Endothelial cell of umbilical vein (primary cell): ENCODE measurements at regions of chr20 and their contacts with region 1.

Region 1: DNA sequence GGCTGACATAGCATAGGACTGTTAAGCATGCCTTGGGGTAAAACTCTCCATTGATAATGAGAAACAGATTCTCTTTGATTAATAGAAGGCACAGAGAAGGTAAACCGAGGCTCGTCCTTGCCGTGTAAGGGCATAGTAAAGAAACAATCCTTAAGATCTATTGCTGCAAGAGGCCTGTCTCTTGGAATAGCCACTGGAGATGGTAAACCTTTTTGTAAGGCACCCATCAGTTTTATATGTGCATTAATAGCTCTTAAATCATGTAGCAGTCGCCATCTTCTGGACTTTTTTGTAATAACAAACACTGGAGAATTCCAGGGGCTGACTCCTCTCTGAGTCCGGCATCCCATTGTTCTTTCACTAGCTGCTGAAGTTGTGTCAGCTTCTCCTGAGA is 8.4 kb upstream of the ABHD12 start:
- DNase-seq: peak; percentile 79
- H3K4me3 ChIP-seq: no peak overlapping the region
- H3K27ac ChIP-seq: no peak overlapping the region
- H3K4me1 ChIP-seq: no peaks in the 10 kb centered on the region
- H3K27me3 ChIP-seq: peaks cover 0 to 1% of the 10 kb centered on the region in 2 experiments
- CTCF ChIP-seq: peak; percentile 35
- POLR2A ChIP-seq: no peak

Region 2: DNA sequence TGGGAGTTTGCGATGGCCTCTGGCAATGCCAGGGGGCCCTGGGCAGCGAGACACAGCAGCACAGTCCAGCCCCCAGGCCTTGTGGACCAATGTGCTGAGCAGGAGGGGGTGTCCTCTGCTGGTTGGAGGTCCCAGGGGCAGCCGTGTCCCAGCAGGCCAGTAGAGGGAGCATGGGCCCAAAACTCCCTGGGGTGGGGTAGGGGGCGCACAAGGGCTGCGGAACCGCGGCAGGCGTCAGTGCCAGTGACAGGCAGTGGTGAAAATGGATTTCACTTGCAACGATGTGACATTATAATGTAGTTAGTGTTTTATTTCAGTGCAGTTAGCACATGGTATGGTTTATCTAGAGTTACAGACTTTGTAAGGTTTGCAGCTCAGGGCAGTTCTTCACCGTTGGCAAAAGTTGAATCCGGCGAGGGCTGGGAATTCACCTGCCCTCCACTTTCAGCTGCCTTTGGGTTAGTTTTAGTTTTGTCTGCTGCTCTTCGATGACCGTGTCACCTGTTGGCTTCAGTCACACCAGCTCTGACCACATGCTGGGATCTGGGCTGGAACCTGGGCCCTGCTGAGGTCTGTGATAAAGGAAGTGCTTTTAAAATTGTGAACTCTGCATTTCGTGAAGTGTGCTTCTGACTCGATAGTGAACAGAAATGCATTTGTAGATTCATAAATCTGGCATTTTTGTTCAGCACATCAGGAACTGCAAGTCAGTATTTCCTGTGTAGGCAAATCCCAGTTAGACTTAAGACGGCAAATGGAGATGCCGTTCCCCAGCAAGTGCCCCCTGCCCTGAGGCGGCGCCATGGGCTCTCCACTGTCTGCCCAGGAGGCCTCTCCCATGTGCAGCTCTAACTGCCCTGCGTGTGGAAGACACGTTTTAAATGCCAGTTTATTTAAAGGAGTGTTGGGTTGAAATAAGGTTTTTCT is 104.3 kb before region 1 on chr20:
- CTCF ChIA-PET with region 1: interaction called, 104 read pairs
- POLR2A ChIA-PET with region 1: no interaction called
- dilution Hi-C with region 1: no loop called
- intact Hi-C with region 1: loop called (anchors 1 kb)
- DNase-seq: peak; percentile 71
- H3K4me3 ChIP-seq: no peak overlapping the region
- H3K27ac ChIP-seq: no peak overlapping the region
- H3K4me1 ChIP-seq: no peaks in the 10 kb centered on the region
- H3K27me3 ChIP-seq: no peaks in the 10 kb centered on the region
- CTCF ChIP-seq: peak; percentile 93 to 98
- POLR2A ChIP-seq: no peak

Region 3: GRCh38 chr20:25310268-25310920 is 88.6 kb before region 1 on chr20:
- CTCF ChIA-PET with region 1: interaction called, 31 read pairs
- POLR2A ChIA-PET with region 1: no interaction called
- dilution Hi-C with region 1: no loop called
- intact Hi-C with region 1: loop called (anchors 1 kb)
- DNase-seq: peak; percentile 68
- H3K4me3 ChIP-seq: no peak overlapping the region
- H3K27ac ChIP-seq: peak overlapping the region; percentile 21
- H3K4me1 ChIP-seq: peaks cover 16% of the 10 kb centered on the region
- H3K27me3 ChIP-seq: no peaks in the 10 kb centered on the region
- CTCF ChIP-seq: peak; percentile 38 to 44
- POLR2A ChIP-seq: no peak

Region 4: DNA sequence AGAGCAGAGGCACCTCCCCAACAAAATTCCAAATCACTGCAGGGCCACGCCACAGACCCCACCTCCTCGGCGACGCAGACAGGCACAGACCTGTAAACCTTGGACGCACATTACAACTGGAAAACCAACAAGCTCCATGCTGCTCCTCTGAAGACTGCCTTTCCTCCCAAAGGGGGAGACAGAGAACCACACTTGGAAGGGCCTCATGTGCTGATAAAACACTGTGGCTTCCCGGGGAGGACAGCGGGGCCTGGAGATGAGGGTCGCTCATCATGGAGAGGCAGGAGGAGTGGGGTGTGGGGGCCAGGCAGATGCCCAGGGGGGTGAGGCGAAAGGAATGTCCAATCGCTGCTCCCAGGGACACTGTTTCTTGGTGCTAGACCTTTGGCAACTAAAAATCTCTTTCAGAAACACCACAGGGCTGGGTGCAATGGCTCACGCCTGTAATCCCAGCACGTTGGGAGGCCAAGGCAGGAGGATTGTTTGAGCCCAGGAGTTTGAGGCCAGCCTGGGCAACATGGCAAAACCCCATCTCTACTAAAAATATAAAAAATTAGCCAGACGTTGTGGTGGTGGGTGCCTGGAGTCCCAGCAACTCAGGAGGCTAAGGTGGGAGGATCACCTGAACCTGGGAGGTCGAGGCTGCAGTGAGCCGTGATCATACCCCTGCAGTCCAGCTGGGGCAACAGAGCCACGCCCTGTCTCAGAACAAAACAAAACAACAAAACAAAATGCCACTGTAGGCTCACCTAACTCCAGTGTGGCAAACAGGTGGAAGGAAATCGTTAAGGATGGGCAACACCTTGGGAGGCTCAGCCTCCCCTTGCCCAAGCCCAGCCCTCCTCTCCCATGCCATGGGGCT is 62.2 kb before region 1 on chr20:
- CTCF ChIA-PET with region 1: interaction called, 65 read pairs
- POLR2A ChIA-PET with region 1: no interaction called
- dilution Hi-C with region 1: no loop called
- intact Hi-C with region 1: no loop called
- DNase-seq: no peak
- H3K4me3 ChIP-seq: no peak overlapping the region
- H3K27ac ChIP-seq: no peak overlapping the region
- H3K4me1 ChIP-seq: no peaks in the 10 kb centered on the region
- H3K27me3 ChIP-seq: no peaks in the 10 kb centered on the region
- CTCF ChIP-seq: no peak
- POLR2A ChIP-seq: no peak

Region 5: DNA sequence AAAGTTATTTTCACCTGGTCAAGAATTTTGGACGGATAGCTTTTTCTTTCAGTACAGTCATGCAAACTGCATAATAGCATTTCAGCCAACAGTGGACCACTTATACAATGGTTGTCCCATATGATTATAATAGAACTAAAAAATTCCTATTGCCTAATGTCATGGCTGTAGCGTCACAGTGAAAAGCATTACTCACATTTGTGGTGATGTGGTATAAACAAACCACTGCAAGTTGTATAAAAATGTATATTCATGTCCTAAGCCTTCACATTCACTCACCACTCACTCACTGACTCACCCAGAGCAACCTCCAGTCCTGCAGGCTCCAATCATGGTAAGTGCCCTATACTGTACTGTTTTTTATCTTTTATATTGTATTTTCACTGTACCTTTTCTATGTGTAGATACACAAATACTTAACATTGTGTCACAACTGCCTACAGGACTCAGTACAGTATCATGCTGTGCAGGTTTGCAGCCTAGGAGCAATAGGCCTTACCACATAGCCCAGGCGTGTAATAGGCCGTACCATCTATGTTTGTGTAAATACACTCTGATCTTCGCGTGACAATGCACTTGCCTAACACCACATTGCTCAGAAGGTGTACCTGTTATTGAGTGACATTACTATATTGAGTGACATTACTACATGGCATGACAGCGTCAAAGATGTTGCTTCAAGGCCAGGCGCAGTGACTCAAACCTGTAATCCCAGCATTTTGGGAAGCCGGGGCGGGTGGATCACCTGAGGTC is 26.3 kb before region 1 on chr20:
- CTCF ChIA-PET with region 1: no interaction called
- POLR2A ChIA-PET with region 1: no interaction called
- dilution Hi-C with region 1: no loop called
- intact Hi-C with region 1: no loop called
- DNase-seq: no peak
- H3K4me3 ChIP-seq: no peak overlapping the region
- H3K27ac ChIP-seq: no peak overlapping the region
- H3K4me1 ChIP-seq: no peaks in the 10 kb centered on the region
- H3K27me3 ChIP-seq: no peaks in the 10 kb centered on the region
- CTCF ChIP-seq: no peak
- POLR2A ChIP-seq: no peak